Naive thymus-derived CD4-positive, alpha-beta T cell (primary cell): ENCODE measurements at regions of chr6 and their contacts with region 1.

Region 1: DNA sequence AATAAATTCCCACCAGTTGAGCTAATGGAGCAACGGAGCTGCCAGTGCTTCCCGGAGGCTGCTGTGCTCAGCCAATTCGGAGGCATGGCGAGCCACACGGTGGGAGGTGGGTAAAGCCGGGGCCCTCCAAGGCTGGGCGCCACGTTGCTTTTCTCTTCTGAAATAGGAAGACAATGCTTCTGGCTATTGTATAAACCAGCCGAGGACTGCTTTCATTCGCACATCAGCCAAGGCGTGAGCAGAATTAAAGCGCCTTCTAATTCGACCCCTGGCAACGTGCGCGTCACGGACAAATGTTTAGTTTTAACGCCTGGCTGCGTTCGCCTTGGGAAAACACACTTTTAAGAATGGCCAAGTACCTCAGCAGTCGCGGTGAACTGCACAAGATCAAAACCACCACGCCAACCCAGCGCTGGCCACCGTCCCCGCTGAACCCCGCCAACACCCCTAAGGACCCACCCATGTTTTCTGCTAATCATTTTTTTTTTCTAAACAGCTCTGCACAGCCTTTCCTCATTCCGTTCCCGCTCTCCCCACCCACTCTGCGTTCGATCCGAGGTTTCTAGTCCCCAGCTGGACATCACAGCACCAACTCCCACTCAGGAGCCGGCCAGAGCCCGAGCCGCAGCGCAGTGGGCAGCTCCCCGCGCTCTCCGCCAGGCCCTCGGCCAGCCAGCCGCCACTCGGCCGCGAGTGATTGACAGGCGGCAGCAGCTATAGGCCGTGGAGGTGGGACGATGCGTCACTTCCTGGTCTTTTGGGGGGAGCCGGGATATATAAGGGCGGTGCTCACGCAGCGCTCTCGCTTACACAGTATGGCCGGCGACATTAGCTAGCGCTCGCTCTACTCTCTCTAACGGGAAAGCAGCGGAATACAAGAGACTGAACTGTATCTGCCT is at the start of gene AMD1:
- DNase-seq: peak; percentile 87 to 97 (median 96)
- ATAC-seq: peak; percentile 85
- H3K4me3 ChIP-seq: peak within 1 kb of the TSS; percentile 99
- H3K4me3 Mint-ChIP-seq: peak within 1 kb of the TSS in 9 of 10 donors; percentile 94 to 99 (median 99)
- H3K27ac ChIP-seq: peak within 1 kb of the TSS; percentile 73
- H3K27ac Mint-ChIP-seq: peak within 1 kb of the TSS in 8 of 9 donors; percentile 96 to 100 (median 99)
- H3K4me1 ChIP-seq: peaks cover 26 to 28% of the 10 kb centered on the region in 2 donors
- H3K4me1 Mint-ChIP-seq: peaks cover 19 to 28% (median 27%) of the 10 kb centered on the region in 7 donors
- H3K27me3 ChIP-seq: no peaks in the 10 kb centered on the region
- H3K27me3 Mint-ChIP-seq: no peaks in the 10 kb centered on the region
- total RNA-seq, gene AMD1: 61.1 to 105 (median 73.8) TPM

Region 2: GRCh38 chr6:109440331-109441068 is 1433.7 kb before region 1 on chr6 and contains the starts of genes PPIL6 and SMPD2:
- CTCF ChIA-PET with region 1: no interaction called
- POLR2A ChIA-PET with region 1: no interaction called
- intact Hi-C with region 1: loop called in 1 of 2 experiments (anchors 10 kb)
- DNase-seq: peak; percentile 63 to 85 (median 77)
- ATAC-seq: peak; percentile 91
- H3K4me3 ChIP-seq: peak within 1 kb of the TSS; percentile 65
- H3K4me3 Mint-ChIP-seq: peak within 1 kb of the TSS; percentile 90 to 95 (median 94)
- H3K27ac ChIP-seq: peak within 1 kb of the TSS; percentile 98
- H3K27ac Mint-ChIP-seq: peak within 1 kb of the TSS; percentile 87 to 97 (median 93)
- H3K4me1 ChIP-seq: peaks cover 11% of the 10 kb centered on the region in 2 donors
- H3K4me1 Mint-ChIP-seq: peaks cover 10 to 32% (median 21%) of the 10 kb centered on the region in 7 donors
- H3K27me3 ChIP-seq: no peaks in the 10 kb centered on the region
- H3K27me3 Mint-ChIP-seq: peaks cover 0 to 2% (median 0%) of the 10 kb centered on the region in 5 donors
- total RNA-seq, gene PPIL6: 0.13 to 1.9 (median 0.40) TPM in 4 of 5 experiments, not detected in the other
- total RNA-seq, gene SMPD2: 16.9 to 33.7 (median 19.6) TPM

Region 3: DNA sequence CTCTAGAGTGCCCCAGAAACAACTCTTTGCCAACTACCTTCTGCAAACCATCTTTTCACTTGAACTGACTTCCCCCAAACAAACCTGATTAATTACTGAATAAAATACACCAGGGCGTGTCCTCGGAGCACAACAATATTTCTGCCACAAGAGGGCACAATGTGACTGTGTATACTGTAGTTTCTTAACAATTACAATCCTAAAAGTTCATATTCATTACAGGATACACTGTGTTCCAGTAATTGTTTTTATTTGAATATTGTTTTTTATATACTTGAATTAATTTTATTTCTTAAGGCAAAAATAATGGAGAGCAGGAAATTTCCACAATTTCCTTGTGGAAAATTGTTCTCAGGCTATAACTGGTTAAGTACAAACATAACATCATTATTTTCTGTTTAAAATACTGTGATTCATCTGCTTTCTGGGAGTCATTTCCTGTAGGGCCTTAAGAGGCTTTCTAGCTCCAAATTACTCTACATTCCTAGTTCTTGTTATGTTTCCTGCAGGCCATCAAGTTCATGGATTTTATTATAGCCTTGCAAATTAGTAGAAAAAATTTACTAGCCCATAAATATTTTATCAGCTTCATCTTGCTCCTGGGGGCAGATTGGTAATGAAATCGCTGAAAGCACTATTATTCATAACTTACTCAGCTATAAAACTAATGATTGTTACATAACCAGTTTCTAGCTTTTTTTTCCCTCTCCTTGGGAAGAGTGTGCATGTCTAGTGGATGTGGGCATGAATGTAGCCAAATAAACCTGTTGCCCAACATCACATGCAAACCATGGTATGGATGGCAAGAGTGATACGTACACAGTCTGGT is 345.9 kb before region 1 on chr6:
- CTCF ChIA-PET with region 1: no interaction called
- POLR2A ChIA-PET with region 1: no interaction called
- intact Hi-C with region 1: loop called (anchors 1 to 2 kb)
- DNase-seq: peak in 7 of 9 donors; percentile 15 to 61 (median 47)
- ATAC-seq: peak; percentile 83
- H3K4me3 ChIP-seq: no peak overlapping the region
- H3K4me3 Mint-ChIP-seq: no peak overlapping the region
- H3K27ac ChIP-seq: no peak overlapping the region
- H3K27ac Mint-ChIP-seq: peak overlapping the region in 1 of 9 donors; percentile 21
- H3K4me1 ChIP-seq: no peaks in the 10 kb centered on the region
- H3K4me1 Mint-ChIP-seq: peaks cover 0 to 10% (median 0%) of the 10 kb centered on the region in 7 donors
- H3K27me3 ChIP-seq: no peaks in the 10 kb centered on the region
- H3K27me3 Mint-ChIP-seq: peaks cover 0 to 11% (median 0%) of the 10 kb centered on the region in 5 donors

Region 4: GRCh38 chr6:110884321-110884720 is 10.1 kb after region 1 on chr6:
- CTCF ChIA-PET with region 1: interaction called, 3 read pairs
- POLR2A ChIA-PET with region 1: interaction called, 32 read pairs
- intact Hi-C with region 1: no loop called
- DNase-seq: no peak
- ATAC-seq: no peak
- H3K4me3 ChIP-seq: no peak overlapping the region
- H3K4me3 Mint-ChIP-seq: peak overlapping the region in 6 of 10 donors; percentile 11 to 55 (median 38)
- H3K27ac ChIP-seq: no peak overlapping the region
- H3K27ac Mint-ChIP-seq: peak overlapping the region in 8 of 9 donors; percentile 8 to 71 (median 50)
- H3K4me1 ChIP-seq: peaks cover 44 to 51% of the 10 kb centered on the region in 2 donors
- H3K4me1 Mint-ChIP-seq: peaks cover 50 to 90% (median 78%) of the 10 kb centered on the region in 7 donors
- H3K27me3 ChIP-seq: no peaks in the 10 kb centered on the region
- H3K27me3 Mint-ChIP-seq: no peaks in the 10 kb centered on the region

Region 5: DNA sequence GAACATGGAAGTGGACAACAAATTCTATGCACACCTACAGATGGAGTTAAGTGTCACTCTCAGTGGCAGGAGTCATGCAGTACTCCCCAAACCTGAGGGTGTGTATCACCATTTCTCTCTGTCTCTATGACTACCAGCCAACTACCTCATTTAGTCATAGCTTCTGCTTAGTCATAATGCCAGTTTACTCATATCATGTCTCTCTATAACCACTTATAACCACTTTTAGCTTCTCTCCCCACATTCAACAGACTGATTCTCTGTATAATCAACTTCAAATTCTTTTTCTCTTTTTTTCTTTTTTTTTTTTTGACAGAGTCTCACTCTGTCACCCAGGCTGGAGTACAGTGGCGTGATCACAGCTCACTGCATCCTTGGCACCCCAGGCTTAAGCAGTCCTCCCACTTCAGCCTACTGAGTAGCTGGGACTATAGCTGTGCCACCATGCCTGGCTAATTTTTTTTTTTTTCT is 70.5 kb after region 1 on chr6:
- CTCF ChIA-PET with region 1: interaction called, 4 read pairs
- POLR2A ChIA-PET with region 1: interaction called, 3 read pairs
- intact Hi-C with region 1: loop called (anchors 2 kb)
- DNase-seq: peak in 1 of 9 donors; percentile 49
- ATAC-seq: peak; percentile 96
- H3K4me3 ChIP-seq: no peak overlapping the region
- H3K4me3 Mint-ChIP-seq: no peak overlapping the region
- H3K27ac ChIP-seq: no peak overlapping the region
- H3K27ac Mint-ChIP-seq: peak overlapping the region in 1 of 9 donors; percentile 77
- H3K4me1 ChIP-seq: no peaks in the 10 kb centered on the region
- H3K4me1 Mint-ChIP-seq: peaks cover 0 to 6% (median 0%) of the 10 kb centered on the region in 7 donors
- H3K27me3 ChIP-seq: no peaks in the 10 kb centered on the region
- H3K27me3 Mint-ChIP-seq: no peaks in the 10 kb centered on the region

Region 6: GRCh38 chr6:110981202-110981600 is 107.0 kb after region 1 on chr6:
- CTCF ChIA-PET with region 1: interaction called, 3 read pairs
- POLR2A ChIA-PET with region 1: interaction called, 38 read pairs
- intact Hi-C with region 1: loop called (anchors 1 kb)
- DNase-seq: peak in 1 of 9 donors; percentile 28
- ATAC-seq: no peak
- H3K4me3 ChIP-seq: peak overlapping the region; percentile 81
- H3K4me3 Mint-ChIP-seq: peak overlapping the region; percentile 95 to 99 (median 98)
- H3K27ac ChIP-seq: peak overlapping the region; percentile 92
- H3K27ac Mint-ChIP-seq: peak overlapping the region; percentile 96 to 100 (median 99)
- H3K4me1 ChIP-seq: peaks cover 0 to 11% of the 10 kb centered on the region in 2 donors
- H3K4me1 Mint-ChIP-seq: peaks cover 19 to 46% (median 35%) of the 10 kb centered on the region in 7 donors
- H3K27me3 ChIP-seq: no peaks in the 10 kb centered on the region
- H3K27me3 Mint-ChIP-seq: no peaks in the 10 kb centered on the region

Region 7: DNA sequence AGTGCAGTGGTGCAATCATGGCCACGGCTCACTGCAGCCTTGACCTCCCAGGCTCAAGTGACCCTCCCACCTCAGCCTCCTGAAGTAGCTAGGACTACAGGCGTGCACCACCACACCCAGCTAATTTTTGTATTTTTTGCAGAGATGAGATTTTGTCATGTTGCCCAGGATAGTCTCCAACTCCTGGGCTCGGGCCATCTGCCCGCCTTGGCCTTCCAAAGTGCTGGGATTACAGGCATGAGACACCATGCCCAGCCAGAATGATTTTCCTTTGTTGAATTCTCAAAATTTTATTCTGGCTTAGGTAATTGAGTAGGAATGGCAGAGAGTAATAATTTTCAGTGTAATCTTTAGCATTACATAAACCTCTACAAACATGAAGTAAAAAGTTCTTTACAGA is 250.2 kb after region 1 on chr6:
- CTCF ChIA-PET with region 1: no interaction called
- POLR2A ChIA-PET with region 1: no interaction called
- intact Hi-C with region 1: no loop called
- DNase-seq: no peak
- ATAC-seq: no peak
- H3K4me3 ChIP-seq: no peak overlapping the region
- H3K4me3 Mint-ChIP-seq: no peak overlapping the region
- H3K27ac ChIP-seq: no peak overlapping the region
- H3K27ac Mint-ChIP-seq: no peak overlapping the region
- H3K4me1 ChIP-seq: peaks cover 8 to 12% of the 10 kb centered on the region in 2 donors
- H3K4me1 Mint-ChIP-seq: peaks cover 12 to 57% (median 29%) of the 10 kb centered on the region in 7 donors
- H3K27me3 ChIP-seq: no peaks in the 10 kb centered on the region
- H3K27me3 Mint-ChIP-seq: no peaks in the 10 kb centered on the region

Region 8: GRCh38 chr6:112087136-112087911 is 1213.1 kb after region 1 on chr6 and contains the starts of genes FAM229B and TUBE1:
- CTCF ChIA-PET with region 1: no interaction called
- POLR2A ChIA-PET with region 1: interaction called, 3 read pairs
- intact Hi-C with region 1: loop called in 1 of 2 experiments (anchors 1 kb)
- DNase-seq: peak; percentile 70 to 96 (median 90)
- ATAC-seq: peak; percentile 98
- H3K4me3 ChIP-seq: peak within 1 kb of the TSS; percentile 64
- H3K4me3 Mint-ChIP-seq: no peak within 1 kb of the TSS
- H3K27ac ChIP-seq: peak within 1 kb of the TSS; percentile 87
- H3K27ac Mint-ChIP-seq: peak within 1 kb of the TSS in 1 of 9 donors; percentile 65
- H3K4me1 ChIP-seq: peaks cover 0 to 7% of the 10 kb centered on the region in 2 donors
- H3K4me1 Mint-ChIP-seq: peaks cover 0 to 18% (median 10%) of the 10 kb centered on the region in 7 donors
- H3K27me3 ChIP-seq: peaks cover 0 to 3% of the 10 kb centered on the region in 2 donors
- H3K27me3 Mint-ChIP-seq: peaks cover 0 to 37% (median 6%) of the 10 kb centered on the region in 5 donors
- total RNA-seq, gene FAM229B: 0.70 to 5.8 (median 2.0) TPM
- total RNA-seq, gene TUBE1: 19.3 to 50.0 (median 35.1) TPM